Activated B cell treated with CpG ODN at 0.5 μM for 24 hours (primary cell): ENCODE measurements at regions of chr3 and their contacts with region 1.

Region 1: DNA sequence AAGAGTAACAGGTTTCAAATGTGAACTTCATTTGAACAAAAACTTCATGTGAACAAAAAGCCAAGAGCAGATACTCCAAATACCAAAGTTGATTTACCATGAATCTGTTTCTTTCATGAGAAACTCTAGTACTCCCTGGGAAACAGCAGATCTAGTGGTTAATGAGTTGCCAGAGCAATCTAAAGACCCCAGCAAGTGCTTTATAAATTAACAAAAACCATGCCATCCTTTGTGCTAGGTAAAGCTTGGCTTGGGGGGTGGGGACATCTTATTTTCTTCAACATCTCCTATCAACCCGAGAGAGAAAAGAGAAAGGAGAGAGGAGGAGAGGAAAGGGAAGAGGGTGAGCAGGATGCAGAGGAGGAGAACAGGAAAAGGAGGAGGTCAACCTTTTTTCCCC is 100.7 kb downstream of the TBL1XR1 start:
- DNase-seq: no peak
- ATAC-seq: no peak
- H3K4me3 Mint-ChIP-seq: no peak overlapping the region
- H3K27ac Mint-ChIP-seq: peak overlapping the region; percentile 61
- H3K4me1 Mint-ChIP-seq: peaks cover 27% of the 10 kb centered on the region
- H3K27me3 Mint-ChIP-seq: no peaks in the 10 kb centered on the region
- CTCF ChIP-seq: no peak

Region 2: DNA sequence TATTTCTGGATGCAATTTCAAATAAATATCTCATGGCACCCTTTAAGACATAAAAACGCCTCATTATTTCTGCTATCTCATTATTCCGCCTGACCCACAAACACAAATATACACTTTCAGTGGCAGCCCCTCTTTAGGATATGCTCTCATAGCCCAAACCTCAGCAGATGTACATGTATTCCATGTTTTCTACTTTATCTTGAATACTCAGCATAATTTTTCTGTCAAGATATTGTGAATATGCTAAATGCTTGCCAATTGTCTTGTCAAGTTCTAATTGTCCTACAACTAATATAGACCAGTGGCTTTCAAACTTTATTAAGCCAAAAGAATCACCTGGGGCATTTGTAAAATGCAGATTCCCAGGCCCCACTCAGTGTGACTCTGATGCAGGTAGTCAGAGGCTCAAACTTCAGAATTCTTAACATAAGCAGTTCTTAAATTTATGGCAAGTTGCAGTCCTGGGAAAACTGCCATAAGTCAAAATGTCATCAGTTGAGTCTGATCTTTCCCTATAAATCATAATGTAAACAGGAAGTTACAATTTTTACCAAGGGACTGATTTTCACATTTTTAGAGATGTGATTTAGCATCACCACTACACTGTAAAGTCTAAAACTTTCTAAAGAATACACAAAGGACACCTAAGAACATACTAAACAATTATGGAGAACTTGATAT is 34.4 kb before region 1 on chr3:
- CTCF ChIA-PET with region 1: no interaction called
- POLR2A ChIA-PET with region 1: no interaction called
- intact Hi-C with region 1: loop called (anchors 5 kb)
- DNase-seq: no peak
- ATAC-seq: no peak
- H3K4me3 Mint-ChIP-seq: no peak overlapping the region
- H3K27ac Mint-ChIP-seq: no peak overlapping the region
- H3K4me1 Mint-ChIP-seq: peaks cover 43% of the 10 kb centered on the region
- H3K27me3 Mint-ChIP-seq: no peaks in the 10 kb centered on the region
- CTCF ChIP-seq: no peak

Region 3: DNA sequence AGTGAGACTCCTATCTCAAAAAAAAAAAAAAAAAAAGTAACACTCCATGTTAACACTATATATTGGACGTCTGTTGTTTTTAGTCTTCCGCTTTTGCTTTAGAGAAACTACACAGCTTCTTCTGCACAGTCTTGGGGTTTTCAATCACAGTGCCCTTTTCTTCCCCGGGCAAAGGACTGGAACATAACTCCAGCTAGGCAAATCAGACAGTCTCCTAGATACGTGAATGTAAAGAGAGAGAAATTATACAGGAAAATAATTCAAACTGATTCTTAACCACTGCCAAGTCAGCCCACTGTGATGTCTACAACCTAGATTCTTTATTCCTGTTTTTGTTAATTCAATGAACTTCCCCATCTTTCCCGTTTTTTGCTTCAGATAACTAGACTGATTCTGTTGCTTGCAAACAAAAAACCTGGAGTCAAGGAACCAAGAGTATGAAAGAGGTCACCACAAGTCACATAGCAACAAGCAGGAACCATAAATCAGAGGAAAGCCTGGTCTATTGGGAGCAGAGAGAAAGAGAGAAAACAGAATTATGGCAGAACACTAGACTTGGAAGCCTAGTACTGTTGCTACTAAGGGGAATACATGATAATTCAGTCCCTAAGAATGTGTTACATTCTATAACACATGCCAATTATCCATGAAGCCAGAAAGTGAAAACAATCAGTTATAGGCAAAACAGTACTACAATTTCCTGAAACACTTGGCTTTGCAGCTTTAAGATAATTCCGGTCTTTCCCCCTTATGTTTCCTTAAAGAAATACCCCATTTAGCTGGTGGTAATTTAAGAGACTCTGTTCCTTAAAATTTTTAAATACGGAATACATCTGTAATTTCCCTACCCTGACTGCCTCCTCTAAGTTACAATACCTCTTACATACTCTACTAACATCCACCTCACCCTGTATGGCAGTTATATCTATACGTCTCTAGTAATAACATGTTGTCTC is 37.5 kb after region 1 on chr3:
- CTCF ChIA-PET with region 1: no interaction called
- POLR2A ChIA-PET with region 1: no interaction called
- intact Hi-C with region 1: no loop called
- DNase-seq: no peak
- ATAC-seq: no peak
- H3K4me3 Mint-ChIP-seq: no peak overlapping the region
- H3K27ac Mint-ChIP-seq: peak overlapping the region; percentile 38
- H3K4me1 Mint-ChIP-seq: peaks cover 74% of the 10 kb centered on the region
- H3K27me3 Mint-ChIP-seq: no peaks in the 10 kb centered on the region
- CTCF ChIP-seq: no peak

Region 4: DNA sequence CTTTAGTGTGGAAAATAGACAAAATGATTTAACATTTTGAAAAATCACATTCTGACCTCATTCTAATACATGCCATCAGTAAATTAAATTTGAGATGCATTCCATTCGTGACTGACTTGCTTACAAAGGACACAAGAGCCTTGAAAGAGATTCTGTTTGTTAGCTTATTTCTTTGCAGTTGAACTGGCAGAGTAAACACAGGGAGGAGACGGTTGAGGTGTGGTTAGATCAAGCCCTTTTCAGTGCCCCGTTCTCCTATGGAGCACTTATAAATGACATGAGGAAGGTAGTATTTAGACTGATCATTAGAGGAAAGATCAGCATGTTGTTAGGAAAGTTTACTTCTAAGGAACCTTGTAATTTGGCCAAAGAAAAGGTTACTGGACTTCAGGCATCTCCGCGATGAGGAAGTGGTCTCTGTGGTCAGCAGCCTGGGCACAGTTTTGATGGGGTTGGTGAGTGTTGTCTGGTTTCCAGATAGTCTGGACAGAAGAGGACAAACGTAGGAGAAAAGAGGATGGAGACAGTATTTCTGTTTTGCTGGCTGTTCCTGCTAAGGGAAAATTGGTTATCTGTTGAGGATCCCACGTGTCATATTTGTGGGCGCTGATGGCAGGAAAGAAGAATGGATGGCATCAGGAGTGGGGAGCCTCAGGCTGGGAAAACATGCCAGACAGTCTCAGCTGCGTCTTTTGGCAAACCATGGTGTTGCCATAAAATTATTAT is 429.5 kb after region 1 on chr3:
- CTCF ChIA-PET with region 1: no interaction called
- POLR2A ChIA-PET with region 1: no interaction called
- intact Hi-C with region 1: no loop called
- DNase-seq: no peak
- ATAC-seq: no peak
- H3K4me3 Mint-ChIP-seq: no peak overlapping the region
- H3K27ac Mint-ChIP-seq: no peak overlapping the region
- H3K4me1 Mint-ChIP-seq: peaks cover 2% of the 10 kb centered on the region
- H3K27me3 Mint-ChIP-seq: no peaks in the 10 kb centered on the region
- CTCF ChIP-seq: no peak